ENCODE measurements at regions of chrX and their contacts with region 1.

Region 1: GRCh38 chrX:16436348-16437188 is 213.4 kb upstream of the S100G start:
- DNase-seq: no peak
- H3K4me3 ChIP-seq: no peak overlapping the region
- H3K27ac ChIP-seq: no peak overlapping the region
- H3K27me3 ChIP-seq: no peaks in the 10 kb centered on the region
- CTCF ChIP-seq: peak; percentile 59

Region 2: GRCh38 chrX:16123222-16123786 is 313.3 kb before region 1 on chrX and contains the start of gene GRPR:
- CTCF ChIA-PET with region 1: interaction called, 16 read pairs
- POLR2A ChIA-PET with region 1: no interaction called
- DNase-seq: peak; percentile 74
- H3K4me3 ChIP-seq: no peak within 1 kb of the TSS
- H3K27ac ChIP-seq: no peak within 1 kb of the TSS
- H3K27me3 ChIP-seq: no peaks in the 10 kb centered on the region
- CTCF ChIP-seq: peak; percentile 70
- polyA plus RNA-seq, gene GRPR: 1.7 and 2.0 TPM in 2 replicates

Region 3: DNA sequence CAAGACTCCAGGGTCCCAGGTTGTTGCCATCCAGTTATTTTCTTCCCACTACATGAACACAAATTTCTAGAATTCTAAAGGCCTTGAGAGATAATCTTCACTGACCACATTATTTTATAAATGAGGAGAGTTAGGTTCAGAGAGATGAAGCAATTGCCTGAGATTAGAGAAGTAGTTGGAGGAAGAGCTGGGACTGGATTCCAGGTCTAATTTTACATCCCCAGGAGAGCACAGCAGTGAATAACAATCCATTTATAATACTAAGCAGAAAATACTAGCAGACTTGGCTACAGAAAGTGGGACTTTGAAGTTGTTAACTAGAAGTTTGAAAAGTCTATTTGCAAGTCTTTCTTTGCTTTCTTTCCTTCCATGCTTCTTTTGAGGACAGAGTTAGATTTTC is 17.9 kb before region 1 on chrX:
- CTCF ChIA-PET with region 1: interaction called, 14 read pairs
- POLR2A ChIA-PET with region 1: no interaction called
- DNase-seq: no peak
- H3K4me3 ChIP-seq: no peak overlapping the region
- H3K27ac ChIP-seq: no peak overlapping the region
- H3K27me3 ChIP-seq: no peaks in the 10 kb centered on the region
- CTCF ChIP-seq: no peak

Region 4: DNA sequence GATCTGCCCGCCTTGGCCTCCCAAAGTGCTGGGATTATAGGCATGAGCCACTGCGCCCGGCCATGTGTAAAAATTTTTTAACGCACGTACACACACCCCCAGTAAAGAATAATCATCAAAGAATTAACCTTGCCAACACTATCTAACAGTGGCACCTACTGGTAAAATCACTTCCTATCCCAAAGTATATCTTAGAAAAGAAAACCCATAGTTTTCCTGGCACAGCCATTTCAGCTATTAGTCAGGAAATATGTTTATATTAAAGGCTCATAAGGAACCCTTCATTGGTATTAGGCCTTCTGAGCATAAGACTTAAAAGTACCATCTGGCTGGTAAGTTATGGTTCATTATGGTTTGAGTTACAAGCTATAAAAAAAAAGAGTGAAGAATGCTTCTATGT is 227.5 kb after region 1 on chrX:
- CTCF ChIA-PET with region 1: interaction called, 12 read pairs
- POLR2A ChIA-PET with region 1: no interaction called
- DNase-seq: no peak
- H3K4me3 ChIP-seq: no peak overlapping the region
- H3K27ac ChIP-seq: no peak overlapping the region
- H3K27me3 ChIP-seq: no peaks in the 10 kb centered on the region
- CTCF ChIP-seq: peak; percentile 33

Region 5: DNA sequence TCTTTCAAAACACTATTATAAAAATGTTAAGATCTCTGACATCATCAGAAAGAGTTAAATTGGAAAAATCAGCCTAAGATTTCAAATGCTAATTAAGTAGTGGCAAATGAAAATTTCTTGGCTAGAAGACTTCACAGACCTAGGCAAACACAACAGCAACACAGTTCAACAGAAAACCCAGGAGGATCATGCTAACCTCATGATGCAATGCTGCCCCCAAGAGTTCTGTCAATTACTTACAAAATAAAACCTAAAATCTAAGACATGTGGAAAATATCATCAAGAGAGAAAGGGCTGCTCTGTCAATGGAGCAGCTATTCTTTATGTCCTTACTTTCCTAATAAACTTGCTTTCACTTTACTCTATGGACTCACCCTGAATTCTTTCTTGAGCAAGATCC is 234.4 kb after region 1 on chrX:
- CTCF ChIA-PET with region 1: interaction called, 10 read pairs
- POLR2A ChIA-PET with region 1: no interaction called
- DNase-seq: no peak
- H3K4me3 ChIP-seq: no peak overlapping the region
- H3K27ac ChIP-seq: no peak overlapping the region
- H3K27me3 ChIP-seq: no peaks in the 10 kb centered on the region
- CTCF ChIP-seq: peak; percentile 32